ENCODE measurements at regions of chr13 and their contacts with region 1.

Region 1: DNA sequence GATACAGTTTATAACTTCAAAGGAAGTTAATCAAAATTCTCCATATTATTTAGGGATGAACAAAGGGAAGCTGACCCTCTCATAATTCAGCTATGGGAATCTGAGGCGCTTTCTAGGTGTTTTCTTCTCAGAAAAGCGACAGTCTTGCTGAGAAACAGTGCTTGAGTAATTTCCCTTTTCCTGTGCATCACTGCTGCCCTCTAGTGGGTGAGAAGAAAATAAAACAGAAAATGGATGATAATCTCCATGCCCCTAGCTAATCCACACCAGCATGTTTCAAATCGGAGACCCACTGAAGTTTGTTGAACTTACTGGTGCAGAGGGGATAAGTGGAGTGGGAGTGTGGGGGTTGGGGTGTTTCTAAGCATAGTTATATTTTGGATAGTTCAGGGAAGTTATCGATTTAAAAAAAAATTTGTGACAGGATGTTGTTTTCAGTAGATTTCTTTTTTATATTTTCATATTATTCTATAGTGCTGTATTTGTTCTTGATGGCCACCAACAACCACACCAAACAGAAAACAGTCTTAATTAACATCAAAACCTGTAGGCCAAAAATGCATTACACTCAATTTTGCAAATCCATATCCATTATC is 21.4 kb downstream of the LCP1 start:
- DNase-seq: peak; percentile 69
- H3K4me3 ChIP-seq: no peak overlapping the region
- H3K27ac ChIP-seq: no peak overlapping the region
- H3K4me1 ChIP-seq: no peaks in the 10 kb centered on the region
- H3K27me3 ChIP-seq: peaks cover 8 to 24% of the 10 kb centered on the region in 2 experiments
- CTCF ChIP-seq: peak; percentile 59 to 74
- POLR2A ChIP-seq: no peak

Region 2: GRCh38 chr13:45807520-45808099 is 353.0 kb before region 1 on chr13:
- CTCF ChIA-PET with region 1: interaction called, 50 read pairs
- POLR2A ChIA-PET with region 1: no interaction called
- dilution Hi-C with region 1: no loop called
- intact Hi-C with region 1: loop called (anchors 1 kb)
- DNase-seq: peak; percentile 63
- H3K4me3 ChIP-seq: no peak overlapping the region
- H3K27ac ChIP-seq: no peak overlapping the region
- H3K4me1 ChIP-seq: no peaks in the 10 kb centered on the region
- H3K27me3 ChIP-seq: peaks cover 2 to 4% of the 10 kb centered on the region in 2 experiments
- CTCF ChIP-seq: peak; percentile 53 to 60
- POLR2A ChIP-seq: no peak

Region 3: DNA sequence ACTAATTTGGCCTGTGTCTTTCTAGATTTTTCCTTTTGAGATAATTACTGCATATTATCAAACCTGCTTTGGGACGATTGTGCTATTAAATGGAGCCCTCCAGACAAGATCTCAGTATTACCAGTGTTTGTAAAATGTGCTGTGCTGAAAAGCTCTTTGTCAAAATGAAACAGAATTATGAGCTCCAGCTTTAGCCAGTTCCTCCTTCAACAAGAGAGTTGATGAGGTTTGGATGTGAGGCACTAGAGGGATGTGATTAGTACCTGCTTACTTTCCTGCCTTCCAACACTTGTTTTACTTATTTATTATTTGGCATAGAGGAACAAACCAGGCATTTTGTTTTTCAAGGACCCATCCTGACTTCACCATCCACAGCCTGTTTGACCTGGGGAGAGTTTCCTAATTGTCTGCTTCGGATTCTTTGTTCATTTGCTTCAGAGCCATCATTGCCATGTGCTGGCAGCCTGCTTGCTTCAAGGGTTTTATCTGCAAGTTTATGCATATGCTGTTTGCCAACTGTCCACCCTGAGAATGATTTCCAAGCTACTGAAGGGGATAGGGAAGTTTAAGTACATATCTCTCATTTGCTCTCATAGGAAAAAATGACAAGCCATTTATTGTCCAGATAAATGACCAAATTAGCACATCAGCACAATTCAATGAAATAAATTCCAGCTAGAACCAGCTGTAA is 22.8 kb before region 1 on chr13:
- CTCF ChIA-PET with region 1: interaction called, 16 read pairs
- POLR2A ChIA-PET with region 1: no interaction called
- dilution Hi-C with region 1: no loop called
- intact Hi-C with region 1: no loop called
- DNase-seq: no peak
- H3K4me3 ChIP-seq: no peak overlapping the region
- H3K27ac ChIP-seq: no peak overlapping the region
- H3K4me1 ChIP-seq: no peaks in the 10 kb centered on the region
- H3K27me3 ChIP-seq: peaks cover 10 to 20% of the 10 kb centered on the region in 2 experiments
- CTCF ChIP-seq: no peak
- POLR2A ChIP-seq: no peak

Region 4: GRCh38 chr13:46149272-46150133 is 11.1 kb before region 1 on chr13:
- CTCF ChIA-PET with region 1: interaction called, 26 read pairs
- POLR2A ChIA-PET with region 1: no interaction called
- dilution Hi-C with region 1: no loop called
- intact Hi-C with region 1: no loop called
- DNase-seq: no peak
- H3K4me3 ChIP-seq: no peak overlapping the region
- H3K27ac ChIP-seq: no peak overlapping the region
- H3K4me1 ChIP-seq: no peaks in the 10 kb centered on the region
- H3K27me3 ChIP-seq: peaks cover 24 to 41% of the 10 kb centered on the region in 2 experiments
- CTCF ChIP-seq: no peak
- POLR2A ChIP-seq: no peak

Region 5: GRCh38 chr13:46288570-46289259 is 128.1 kb after region 1 on chr13:
- CTCF ChIA-PET with region 1: interaction called, 25 read pairs
- POLR2A ChIA-PET with region 1: no interaction called
- dilution Hi-C with region 1: no loop called
- intact Hi-C with region 1: loop called (anchors 1 kb)
- DNase-seq: peak; percentile 50
- H3K4me3 ChIP-seq: no peak overlapping the region
- H3K27ac ChIP-seq: no peak overlapping the region
- H3K4me1 ChIP-seq: no peaks in the 10 kb centered on the region
- H3K27me3 ChIP-seq: no peaks in the 10 kb centered on the region
- CTCF ChIP-seq: peak; percentile 55 to 73
- POLR2A ChIP-seq: no peak

Region 6: DNA sequence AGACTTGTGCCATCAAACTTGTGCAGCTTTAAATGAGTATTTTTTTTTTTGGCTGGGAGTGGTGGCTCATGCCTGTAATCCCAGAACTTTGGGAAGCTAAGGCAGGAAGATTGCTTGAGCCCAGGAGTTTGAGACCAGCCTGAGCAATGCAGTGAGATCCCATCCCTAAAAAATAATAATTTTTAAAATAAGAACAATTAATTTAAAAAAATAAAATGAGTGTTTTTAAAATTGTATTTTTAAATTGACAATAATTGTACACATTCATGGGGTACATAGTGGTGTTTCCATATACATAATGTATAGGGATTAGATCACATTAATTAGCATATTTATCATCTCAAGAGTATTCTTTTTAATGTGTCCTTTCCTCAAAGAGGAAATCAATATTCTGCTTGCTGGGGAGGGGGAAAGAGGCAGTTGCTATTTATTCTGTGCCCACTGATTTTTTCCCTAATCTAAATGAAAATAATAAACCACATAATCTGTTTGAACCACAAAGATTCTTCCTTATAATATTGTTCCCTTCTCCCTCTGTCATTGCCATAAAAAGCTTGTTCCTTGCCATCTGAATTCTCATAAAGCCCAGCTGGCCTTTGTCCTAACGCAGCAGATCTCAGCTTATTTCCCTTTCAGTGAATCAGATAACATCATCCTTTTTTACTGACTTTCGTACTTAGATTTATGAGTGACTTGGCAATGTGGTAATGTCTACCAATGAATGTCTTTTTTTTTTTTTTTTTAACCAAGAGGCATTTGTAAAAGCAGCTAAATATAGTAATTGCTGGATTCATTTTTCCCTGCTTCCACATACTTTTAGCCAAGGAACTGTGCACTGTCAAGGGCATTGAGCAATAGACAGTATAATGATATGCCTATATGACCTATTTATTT is 308.2 kb after region 1 on chr13:
- CTCF ChIA-PET with region 1: no interaction called
- POLR2A ChIA-PET with region 1: no interaction called
- dilution Hi-C with region 1: no loop called
- intact Hi-C with region 1: no loop called
- DNase-seq: no peak
- H3K4me3 ChIP-seq: no peak overlapping the region
- H3K27ac ChIP-seq: no peak overlapping the region
- H3K4me1 ChIP-seq: no peaks in the 10 kb centered on the region
- H3K27me3 ChIP-seq: no peaks in the 10 kb centered on the region
- CTCF ChIP-seq: no peak
- POLR2A ChIP-seq: no peak

Region 7: DNA sequence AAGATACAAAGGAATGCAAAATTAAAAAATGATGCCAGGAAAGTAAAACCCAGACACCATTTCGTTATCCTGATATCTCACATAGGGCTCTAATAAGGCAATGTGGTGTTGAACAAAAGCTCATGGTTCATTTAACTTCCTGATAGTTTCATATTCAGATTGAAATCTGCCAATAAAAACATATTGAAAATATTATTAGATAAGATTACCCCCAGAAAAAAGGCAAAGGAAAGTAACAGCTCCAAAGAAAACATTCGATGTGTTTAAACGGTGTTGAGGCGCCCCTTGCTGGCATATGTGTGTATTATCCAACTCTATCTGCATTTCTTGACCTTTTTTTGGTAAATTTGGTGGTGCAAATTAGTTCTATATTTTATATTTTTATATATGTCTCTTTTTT is 560.5 kb after region 1 on chr13:
- CTCF ChIA-PET with region 1: interaction called, 6 read pairs
- POLR2A ChIA-PET with region 1: no interaction called
- dilution Hi-C with region 1: no loop called
- intact Hi-C with region 1: loop called (anchors 10 kb)
- DNase-seq: peak; percentile 83
- H3K4me3 ChIP-seq: no peak overlapping the region
- H3K27ac ChIP-seq: no peak overlapping the region
- H3K4me1 ChIP-seq: peaks cover 12% of the 10 kb centered on the region
- H3K27me3 ChIP-seq: peaks cover 0 to 9% of the 10 kb centered on the region in 2 experiments
- CTCF ChIP-seq: peak; percentile 36 to 51
- POLR2A ChIP-seq: no peak

Measured in endothelial cell of umbilical vein (primary cell).